B cell (primary cell): ENCODE measurements at regions of chr1 and their contacts with region 1.

Region 1: DNA sequence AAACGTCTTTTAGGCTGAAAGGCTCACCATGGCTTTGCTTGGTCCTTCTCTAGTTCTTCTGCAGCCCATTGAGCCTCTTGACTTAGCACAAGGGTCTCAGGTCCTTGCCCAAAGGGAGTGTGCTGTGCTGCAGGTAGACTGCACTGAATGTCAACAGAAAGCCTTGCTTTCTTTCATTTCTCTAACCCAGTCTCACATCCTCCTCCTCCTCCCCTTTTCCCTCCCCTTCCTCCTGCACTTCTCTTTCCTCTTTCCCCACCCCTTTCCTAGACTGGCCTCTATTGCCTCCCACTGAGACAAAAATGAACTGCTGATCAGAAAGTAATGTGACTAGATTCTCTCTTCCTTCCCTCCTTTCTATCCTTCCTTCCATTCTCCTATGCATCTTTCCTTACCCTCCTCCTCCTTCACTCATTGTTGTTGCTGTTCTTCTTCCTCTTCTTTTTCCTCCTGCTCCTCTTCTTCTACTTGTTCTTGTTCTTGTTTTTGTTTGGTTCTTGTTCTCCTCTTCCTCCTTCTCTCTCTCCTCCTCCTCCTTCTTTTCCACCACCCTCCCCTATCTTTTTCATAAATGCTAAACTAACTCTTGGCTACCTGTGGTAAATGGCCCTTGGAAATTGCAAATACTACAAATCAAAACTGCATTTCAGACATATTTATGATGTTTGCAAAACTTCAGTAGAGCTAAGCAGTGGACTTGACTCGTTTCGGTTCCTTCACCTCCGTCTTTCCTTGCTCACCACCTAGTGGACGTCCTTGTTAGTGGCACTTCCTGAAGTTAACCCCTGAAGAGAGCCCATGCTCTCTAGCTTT is at the start of gene SELL:
- DNase-seq: peak; percentile 85
- ATAC-seq: peak; percentile 78
- H3K4me3 ChIP-seq: peak within 1 kb of the TSS; percentile 50 to 99 (median 82)
- H3K4me3 Mint-ChIP-seq: peak within 1 kb of the TSS; percentile 90
- H3K27ac ChIP-seq: peak within 1 kb of the TSS; percentile 45 to 87
- H3K27ac Mint-ChIP-seq: peak within 1 kb of the TSS; percentile 79
- H3K4me1 ChIP-seq: peaks cover 15 to 21% of the 10 kb centered on the region in 2 donors
- H3K4me1 Mint-ChIP-seq: peaks cover 32% of the 10 kb centered on the region
- H3K27me3 ChIP-seq: no peaks in the 10 kb centered on the region
- H3K27me3 Mint-ChIP-seq: peaks cover 3% of the 10 kb centered on the region
- CTCF ChIP-seq: peak; percentile 91
- total RNA-seq, gene SELL: 250 and 262 TPM in 2 replicates

Region 2: DNA sequence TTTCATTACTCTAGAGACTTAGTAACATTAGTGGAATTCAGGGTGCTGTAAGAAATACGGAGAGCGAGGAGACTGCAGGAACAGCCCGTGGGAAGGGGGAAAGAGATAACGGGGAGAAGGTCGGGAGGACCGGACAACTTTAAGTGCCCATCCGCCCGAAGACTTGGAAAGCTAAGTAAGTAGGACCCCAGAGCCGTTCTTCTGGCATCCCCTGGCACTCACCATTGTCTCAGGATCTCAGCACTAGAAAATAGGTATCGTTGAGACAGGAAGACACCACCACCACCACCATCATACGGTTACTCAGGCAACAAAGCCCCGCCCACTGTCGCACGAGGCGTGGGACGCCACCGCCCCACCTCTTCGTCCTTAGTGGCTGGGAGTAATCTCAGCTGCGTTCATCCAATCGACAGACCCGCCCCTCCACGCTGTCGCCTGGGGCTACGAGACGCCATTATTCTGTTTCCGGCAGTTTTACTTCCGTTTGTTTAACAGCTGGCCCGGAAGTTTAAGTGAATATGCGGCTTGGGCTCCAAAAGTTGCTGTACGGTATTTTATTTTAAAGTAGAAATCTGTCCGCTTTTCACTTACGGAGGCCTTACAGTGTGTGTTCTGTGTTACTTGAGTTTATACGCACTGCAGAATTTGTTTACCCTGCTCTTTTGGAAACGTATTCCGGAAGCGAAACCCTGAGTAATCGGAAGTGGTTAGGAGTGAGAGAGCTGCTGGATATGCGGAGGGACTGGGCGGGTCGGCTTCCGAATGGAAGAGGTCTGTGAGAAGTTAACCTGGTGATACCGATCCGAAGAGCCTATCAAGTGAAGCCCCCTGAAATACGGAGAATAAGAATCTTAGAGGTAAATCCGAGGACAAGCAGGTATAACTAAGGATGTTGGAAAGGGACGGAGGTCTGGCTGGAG is 343.9 kb before region 1 on chr1 and contains the starts of genes BLZF1 and NME7:
- CTCF ChIA-PET with region 1: no interaction called
- POLR2A ChIA-PET with region 1: no interaction called
- intact Hi-C with region 1: loop called (anchors 5 kb)
- DNase-seq: peak; percentile 97
- ATAC-seq: peak; percentile 99
- H3K4me3 ChIP-seq: peak within 1 kb of the TSS; percentile 66 to 100 (median 92)
- H3K4me3 Mint-ChIP-seq: peak within 1 kb of the TSS; percentile 42
- H3K27ac ChIP-seq: peak within 1 kb of the TSS; percentile 66 to 86
- H3K27ac Mint-ChIP-seq: no peak within 1 kb of the TSS
- H3K4me1 ChIP-seq: peaks cover 6 to 12% of the 10 kb centered on the region in 2 donors
- H3K4me1 Mint-ChIP-seq: peaks cover 12% of the 10 kb centered on the region
- H3K27me3 ChIP-seq: no peaks in the 10 kb centered on the region
- H3K27me3 Mint-ChIP-seq: no peaks in the 10 kb centered on the region
- CTCF ChIP-seq: no peak
- total RNA-seq, gene BLZF1: 20.1 and 21.3 TPM in 2 replicates
- total RNA-seq, gene NME7: 13.1 and 14.3 TPM in 2 replicates

Region 3: DNA sequence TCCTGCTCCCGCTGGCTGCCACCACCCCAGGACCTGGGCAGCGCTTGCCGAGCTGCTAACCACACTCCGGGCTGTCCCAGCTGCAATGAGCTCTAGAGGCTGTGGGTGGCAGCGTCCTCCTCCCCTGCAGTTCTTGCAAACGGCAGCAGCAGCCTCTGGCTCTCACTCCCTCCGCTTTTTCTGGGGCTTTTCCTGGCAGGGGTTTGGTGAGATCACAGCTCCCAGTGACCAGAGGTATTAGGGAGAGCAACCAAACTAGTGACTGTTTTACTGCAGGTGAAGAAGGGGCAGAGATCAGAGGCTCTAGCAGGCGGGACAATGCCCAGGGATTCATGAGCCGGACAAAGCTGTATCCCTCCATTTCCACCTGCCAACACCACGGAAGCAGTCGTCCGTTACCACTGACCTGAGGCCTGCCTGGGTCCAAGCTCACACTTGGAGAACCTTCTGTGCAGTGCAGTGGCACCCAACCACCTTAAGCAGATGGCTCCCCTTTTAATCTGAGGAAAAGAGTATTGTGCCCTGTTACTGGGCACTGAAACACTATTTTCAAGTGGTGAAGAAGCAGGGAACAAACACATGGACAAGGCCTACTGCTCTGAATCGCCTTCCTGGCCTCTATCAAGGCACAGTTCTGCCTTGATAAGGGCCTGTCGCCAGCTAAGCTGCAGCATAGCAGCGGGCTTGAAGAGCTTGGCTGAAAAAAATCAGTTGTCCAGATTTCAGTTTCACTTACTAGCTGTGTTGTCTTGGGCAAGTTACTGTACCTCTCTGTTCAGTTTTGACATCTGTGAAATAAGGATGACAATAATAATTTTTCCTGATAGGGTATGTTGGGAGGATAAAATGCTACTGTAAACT is 125.0 kb before region 1 on chr1 and contains the start of gene F5:
- CTCF ChIA-PET with region 1: interaction called, 41 read pairs
- POLR2A ChIA-PET with region 1: no interaction called
- intact Hi-C with region 1: loop called (anchors 1 kb)
- DNase-seq: peak; percentile 75
- ATAC-seq: peak; percentile 93
- H3K4me3 ChIP-seq: peak within 1 kb of the TSS in 3 of 5 experiments; percentile 8 to 22 (median 13)
- H3K4me3 Mint-ChIP-seq: peak within 1 kb of the TSS; percentile 69
- H3K27ac ChIP-seq: no peak within 1 kb of the TSS
- H3K27ac Mint-ChIP-seq: no peak within 1 kb of the TSS
- H3K4me1 ChIP-seq: peaks cover 7 to 9% of the 10 kb centered on the region in 2 donors
- H3K4me1 Mint-ChIP-seq: peaks cover 7% of the 10 kb centered on the region
- H3K27me3 ChIP-seq: peaks cover 0 to 13% (median 9%) of the 10 kb centered on the region in 4 experiments
- H3K27me3 Mint-ChIP-seq: peaks cover 26% of the 10 kb centered on the region
- CTCF ChIP-seq: peak; percentile 73
- total RNA-seq, gene F5: 0.15 and 0.27 TPM in 2 replicates

Region 4: DNA sequence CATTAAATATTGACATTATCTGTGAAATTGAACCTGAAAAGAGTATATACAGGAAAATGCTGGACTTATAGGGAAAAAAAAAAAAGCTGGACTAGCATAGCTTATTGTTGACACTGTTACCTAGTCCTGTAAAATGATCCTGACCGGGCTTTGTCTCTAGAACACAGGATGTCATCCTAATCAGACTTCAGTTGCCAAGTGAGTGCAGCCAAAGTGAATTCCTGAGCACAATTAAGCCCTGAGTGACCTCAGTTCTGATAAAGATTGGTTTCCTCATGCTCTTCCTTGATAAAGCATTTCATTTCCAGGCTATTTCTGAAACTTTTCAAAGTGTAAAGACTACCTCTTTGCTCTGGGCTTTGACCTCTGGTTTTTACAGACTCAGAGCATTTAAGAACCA is 101.6 kb before region 1 on chr1:
- CTCF ChIA-PET with region 1: interaction called, 340 read pairs
- POLR2A ChIA-PET with region 1: no interaction called
- intact Hi-C with region 1: no loop called
- DNase-seq: no peak
- ATAC-seq: no peak
- H3K4me3 ChIP-seq: no peak overlapping the region
- H3K4me3 Mint-ChIP-seq: no peak overlapping the region
- H3K27ac ChIP-seq: no peak overlapping the region
- H3K27ac Mint-ChIP-seq: no peak overlapping the region
- H3K4me1 ChIP-seq: peaks cover 8% of the 10 kb centered on the region in 2 donors
- H3K4me1 Mint-ChIP-seq: peaks cover 9% of the 10 kb centered on the region
- H3K27me3 ChIP-seq: no peaks in the 10 kb centered on the region
- H3K27me3 Mint-ChIP-seq: no peaks in the 10 kb centered on the region
- CTCF ChIP-seq: no peak

Region 5: GRCh38 chr1:169694304-169695075 is 17.2 kb before region 1 on chr1:
- CTCF ChIA-PET with region 1: interaction called, 109 read pairs
- POLR2A ChIA-PET with region 1: interaction called, 8 read pairs
- intact Hi-C with region 1: loop called (anchors 1 kb)
- DNase-seq: peak; percentile 59
- ATAC-seq: peak; percentile 20
- H3K4me3 ChIP-seq: peak overlapping the region in 1 of 5 experiments; percentile 37
- H3K4me3 Mint-ChIP-seq: peak overlapping the region; percentile 54
- H3K27ac ChIP-seq: peak overlapping the region; percentile 87 to 88
- H3K27ac Mint-ChIP-seq: peak overlapping the region; percentile 90
- H3K4me1 ChIP-seq: peaks cover 98 to 99% of the 10 kb centered on the region in 2 donors
- H3K4me1 Mint-ChIP-seq: peaks cover 95% of the 10 kb centered on the region
- H3K27me3 ChIP-seq: no peaks in the 10 kb centered on the region
- H3K27me3 Mint-ChIP-seq: no peaks in the 10 kb centered on the region
- CTCF ChIP-seq: peak; percentile 25

Region 6: GRCh38 chr1:169741666-169742394 is 30.2 kb after region 1 on chr1:
- CTCF ChIA-PET with region 1: no interaction called
- POLR2A ChIA-PET with region 1: no interaction called
- intact Hi-C with region 1: no loop called
- DNase-seq: no peak
- ATAC-seq: no peak
- H3K4me3 ChIP-seq: no peak overlapping the region
- H3K4me3 Mint-ChIP-seq: no peak overlapping the region
- H3K27ac ChIP-seq: no peak overlapping the region
- H3K27ac Mint-ChIP-seq: no peak overlapping the region
- H3K4me1 ChIP-seq: no peaks in the 10 kb centered on the region
- H3K4me1 Mint-ChIP-seq: no peaks in the 10 kb centered on the region
- H3K27me3 ChIP-seq: peaks cover 0 to 6% (median under 1%) of the 10 kb centered on the region in 4 experiments
- H3K27me3 Mint-ChIP-seq: peaks cover 22% of the 10 kb centered on the region
- CTCF ChIP-seq: no peak

Region 7: DNA sequence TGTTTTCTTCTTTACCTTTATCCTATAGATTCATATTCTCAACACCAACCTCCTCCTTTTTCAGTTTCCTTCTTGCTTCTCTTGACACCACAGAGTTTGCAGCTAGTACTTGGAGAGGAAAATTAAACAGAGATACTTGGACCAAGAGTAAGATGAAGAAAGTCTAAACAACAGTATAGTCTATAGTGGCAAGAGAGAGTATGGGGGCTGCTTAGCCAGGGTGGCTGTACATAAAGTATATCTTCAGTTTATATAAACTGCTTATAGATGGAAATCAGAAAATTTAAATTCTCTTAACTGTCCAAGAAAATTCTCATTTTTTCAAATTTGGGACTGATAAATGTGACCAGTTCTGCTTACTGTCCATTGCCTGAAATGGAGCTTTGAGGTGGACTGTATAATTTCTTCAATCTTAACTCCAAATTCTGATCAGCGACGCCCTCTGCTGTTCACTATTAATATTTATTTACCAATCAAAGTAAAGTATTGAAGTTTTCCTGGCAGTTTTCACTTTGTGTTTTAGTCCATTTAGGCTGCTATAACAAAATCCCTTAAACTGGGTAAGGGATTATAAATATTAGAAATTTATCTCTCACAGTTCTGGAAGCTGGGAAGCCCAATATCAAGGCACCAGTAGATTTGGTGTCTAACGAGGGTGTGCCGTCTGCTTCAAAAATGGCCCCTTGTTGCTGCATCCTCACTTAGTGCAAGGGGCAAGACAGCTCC is 97.9 kb after region 1 on chr1:
- CTCF ChIA-PET with region 1: interaction called, 26 read pairs
- POLR2A ChIA-PET with region 1: no interaction called
- intact Hi-C with region 1: loop called (anchors 1 kb)
- DNase-seq: peak; percentile 62
- ATAC-seq: no peak
- H3K4me3 ChIP-seq: no peak overlapping the region
- H3K4me3 Mint-ChIP-seq: no peak overlapping the region
- H3K27ac ChIP-seq: no peak overlapping the region
- H3K27ac Mint-ChIP-seq: no peak overlapping the region
- H3K4me1 ChIP-seq: no peaks in the 10 kb centered on the region
- H3K4me1 Mint-ChIP-seq: no peaks in the 10 kb centered on the region
- H3K27me3 ChIP-seq: no peaks in the 10 kb centered on the region
- H3K27me3 Mint-ChIP-seq: no peaks in the 10 kb centered on the region
- CTCF ChIP-seq: peak; percentile 81